ENCODE measurements at regions of chr15 and their contacts with region 1.

Region 1: DNA sequence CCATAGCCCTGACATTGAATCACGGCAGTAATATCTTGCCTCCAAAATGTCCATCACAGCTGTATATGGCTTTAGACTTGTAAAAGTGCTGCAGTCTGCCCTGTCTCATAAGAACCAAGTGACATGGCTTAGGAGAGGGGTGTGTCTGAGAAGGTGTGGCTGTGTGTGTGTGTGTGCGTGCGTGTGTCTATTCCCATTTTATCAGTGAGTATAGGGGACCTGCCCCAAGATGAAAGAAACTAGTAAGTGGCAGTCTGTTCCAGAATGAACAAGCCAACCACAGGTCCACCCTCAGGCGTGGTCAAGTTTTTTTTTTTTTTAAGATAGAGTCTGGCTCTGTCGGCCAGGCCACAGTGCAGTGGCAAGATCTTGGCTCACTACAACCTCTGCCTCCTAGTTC is 5.6 kb upstream of the RHOV start:
- DNase-seq: peak in 2 of 4 experiments; percentile 41 to 55
- ATAC-seq: peak; percentile 82
- H3K4me3 ChIP-seq: no peak overlapping the region
- H3K27ac ChIP-seq: no peak overlapping the region
- H3K4me1 ChIP-seq: peaks cover 0 to 10% of the 10 kb centered on the region in 2 experiments; a peak in 3 of 5 replicates
- H3K27me3 ChIP-seq: no peaks in the 10 kb centered on the region
- CTCF ChIP-seq: no peak
- EP300 ChIP-seq: no peak
- POLR2A ChIP-seq: no peak
- RAD21 ChIP-seq: no peak

Region 2: GRCh38 chr15:40344631-40345120 is 534.9 kb before region 1 on chr15:
- CTCF ChIA-PET with region 1: no interaction called
- POLR2A ChIA-PET with region 1: no interaction called
- in situ Hi-C with region 1: loop called (anchors 10 kb)
- intact Hi-C with region 1: no loop called
- DNase-seq: peak; percentile 78 to 81 (median 78)
- ATAC-seq: peak; percentile 75
- H3K4me3 ChIP-seq: no peak overlapping the region
- H3K27ac ChIP-seq: no peak overlapping the region
- H3K4me1 ChIP-seq: peaks cover 7 to 24% of the 10 kb centered on the region in 2 experiments; a peak in 4 of 5 replicates
- H3K27me3 ChIP-seq: no peaks in the 10 kb centered on the region
- CTCF ChIP-seq: peak; percentile 87 to 91 (median 87)
- EP300 ChIP-seq: no peak
- POLR2A ChIP-seq: no peak
- RAD21 ChIP-seq: peak; percentile 49 to 80

Measured in K562 (cell line).